Mammary epithelial cell (primary cell): ENCODE measurements at regions of chr5 and their contacts with region 1.

Region 1: DNA sequence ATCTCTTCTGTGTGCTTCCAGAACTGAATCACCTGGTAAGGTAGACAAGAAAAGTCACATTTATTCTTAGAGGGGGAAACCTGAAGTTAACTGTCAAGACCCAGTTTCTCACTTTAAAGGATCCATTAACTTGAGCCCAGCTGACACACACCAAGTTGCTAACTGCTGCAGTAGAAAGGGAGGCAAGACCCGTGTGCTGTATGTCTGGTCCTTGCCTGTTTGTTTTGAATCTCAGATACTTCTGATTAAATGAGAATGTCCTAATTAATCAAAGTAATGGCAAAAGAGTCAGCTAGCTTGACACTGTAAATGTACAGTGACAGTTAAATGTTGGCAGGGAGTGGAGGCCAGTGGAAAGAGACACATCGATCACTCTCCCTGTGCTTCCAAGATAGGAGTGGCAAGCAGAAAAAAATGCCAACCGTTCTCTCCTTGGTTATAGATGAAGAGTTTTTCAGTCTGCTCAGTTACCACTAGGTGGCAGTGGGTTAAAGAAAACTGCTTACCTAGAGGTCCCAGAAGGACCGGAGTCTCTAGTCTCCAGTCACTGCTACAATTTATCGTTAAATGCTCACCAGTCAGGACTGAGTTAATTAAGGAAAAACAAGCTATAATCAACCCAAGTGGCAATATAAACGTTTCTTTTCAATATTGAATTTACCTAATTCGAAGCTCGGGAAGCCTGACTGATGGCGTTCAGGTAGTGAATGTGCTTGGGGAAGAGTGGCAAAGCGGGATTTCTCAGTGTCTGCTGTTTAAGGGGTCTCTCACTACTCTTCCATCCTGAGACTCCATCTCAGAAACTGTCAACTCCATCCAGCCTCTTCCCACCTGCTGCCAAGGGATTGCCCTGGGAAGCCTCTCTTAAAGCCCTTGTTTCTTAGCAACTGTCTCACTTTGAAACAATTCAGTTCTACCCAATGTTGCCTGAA is 18.4 kb downstream of the LSM11 start:
- DNase-seq: peak; percentile 59
- H3K4me3 ChIP-seq: no peak overlapping the region
- H3K27ac ChIP-seq: no peak overlapping the region
- H3K4me1 ChIP-seq: no peaks in the 10 kb centered on the region
- H3K27me3 ChIP-seq: no peaks in the 10 kb centered on the region
- CTCF ChIP-seq: peak; percentile 55 to 81

Region 2: DNA sequence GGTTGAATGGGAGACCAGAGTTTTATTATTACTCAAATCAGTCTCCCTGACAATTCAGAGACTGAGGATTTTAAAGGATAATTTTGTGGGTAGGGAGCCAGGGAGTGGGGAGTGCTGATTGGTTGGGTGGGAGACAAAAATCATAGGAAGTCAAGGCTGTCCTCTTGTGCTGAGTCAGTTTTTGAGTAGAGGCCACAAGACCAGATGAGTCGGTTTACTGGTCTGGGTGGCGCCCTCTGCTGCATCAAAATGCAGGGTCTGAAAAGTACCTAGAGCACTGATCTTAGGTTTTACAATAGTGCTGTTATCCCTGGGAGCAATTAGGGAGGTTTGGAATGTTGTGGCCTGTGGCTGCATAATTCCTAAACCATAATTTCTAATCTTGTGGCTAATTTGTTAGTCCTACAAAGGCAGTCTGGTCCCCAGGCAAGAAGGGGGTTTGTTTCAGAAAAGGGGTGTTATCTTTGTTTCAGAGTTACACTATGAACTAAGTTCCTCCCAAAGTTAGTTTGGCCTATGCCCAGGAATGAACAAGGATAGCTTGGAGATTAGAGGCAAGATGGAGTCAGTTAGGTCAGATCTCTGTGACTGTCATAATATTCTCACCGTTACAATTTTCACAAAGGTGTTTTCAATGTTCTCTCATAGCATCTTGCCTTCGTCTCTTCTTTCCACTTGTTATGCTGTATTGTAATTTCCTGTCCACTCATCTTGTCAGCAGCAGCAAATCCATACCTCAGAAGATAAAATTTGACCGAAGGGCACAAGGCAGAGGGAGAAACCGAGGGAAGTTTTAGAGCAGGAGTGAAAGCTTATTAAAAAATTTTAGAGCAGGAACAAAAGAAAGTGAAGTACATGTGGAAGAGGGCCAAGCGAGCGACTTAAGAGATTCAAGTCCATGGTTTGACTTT is 156.2 kb after region 1 on chr5:
- CTCF ChIA-PET with region 1: no interaction called
- dilution Hi-C with region 1: no loop called
- in situ Hi-C with region 1: no loop called
- intact Hi-C with region 1: loop called (anchors 1 kb)
- DNase-seq: peak; percentile 73
- H3K4me3 ChIP-seq: no peak overlapping the region
- H3K27ac ChIP-seq: no peak overlapping the region
- H3K4me1 ChIP-seq: no peaks in the 10 kb centered on the region
- H3K27me3 ChIP-seq: no peaks in the 10 kb centered on the region
- CTCF ChIP-seq: peak; percentile 57 to 77

Region 3: GRCh38 chr5:157994906-157995519 is 233.1 kb after region 1 on chr5:
- CTCF ChIA-PET with region 1: no interaction called
- dilution Hi-C with region 1: no loop called
- in situ Hi-C with region 1: no loop called
- intact Hi-C with region 1: loop called (anchors 1 kb)
- DNase-seq: peak; percentile 67
- H3K4me3 ChIP-seq: no peak overlapping the region
- H3K27ac ChIP-seq: no peak overlapping the region
- H3K4me1 ChIP-seq: no peaks in the 10 kb centered on the region
- H3K27me3 ChIP-seq: no peaks in the 10 kb centered on the region
- CTCF ChIP-seq: peak; percentile 69 to 90

Region 4: GRCh38 chr5:158165638-158166037 is 403.7 kb after region 1 on chr5:
- CTCF ChIA-PET with region 1: no interaction called
- dilution Hi-C with region 1: no loop called
- in situ Hi-C with region 1: no loop called
- intact Hi-C with region 1: no loop called
- DNase-seq: no peak
- H3K4me3 ChIP-seq: no peak overlapping the region
- H3K27ac ChIP-seq: no peak overlapping the region
- H3K4me1 ChIP-seq: no peaks in the 10 kb centered on the region
- H3K27me3 ChIP-seq: peaks cover 4% of the 10 kb centered on the region
- CTCF ChIP-seq: peak; percentile 7 to 19

Region 5: DNA sequence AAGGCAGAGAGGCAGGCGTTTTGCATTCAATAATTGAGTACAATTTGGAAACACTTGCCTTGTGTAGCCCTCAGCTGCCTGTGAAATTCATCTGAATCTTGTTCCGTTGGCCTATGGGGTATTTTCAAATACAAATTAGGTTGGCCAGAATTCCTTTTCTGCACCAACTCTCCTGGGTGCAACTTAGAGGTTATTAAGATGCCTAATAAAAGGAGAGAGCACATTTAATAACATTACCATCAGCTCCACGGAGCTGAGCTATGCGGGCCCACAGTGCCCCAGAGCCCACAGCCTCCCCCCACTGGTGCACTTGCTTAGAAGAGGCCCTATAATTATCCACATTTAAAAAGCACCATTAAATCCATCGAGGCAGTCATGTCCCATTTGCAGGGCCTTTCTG is 464.5 kb after region 1 on chr5:
- CTCF ChIA-PET with region 1: no interaction called
- dilution Hi-C with region 1: no loop called
- in situ Hi-C with region 1: no loop called
- intact Hi-C with region 1: loop called (anchors 5 kb)
- DNase-seq: no peak
- H3K4me3 ChIP-seq: no peak overlapping the region
- H3K27ac ChIP-seq: no peak overlapping the region
- H3K4me1 ChIP-seq: no peaks in the 10 kb centered on the region
- H3K27me3 ChIP-seq: no peaks in the 10 kb centered on the region
- CTCF ChIP-seq: no peak

Region 6: GRCh38 chr5:159106569-159107282 is 1344.8 kb after region 1 on chr5:
- CTCF ChIA-PET with region 1: no interaction called
- dilution Hi-C with region 1: no loop called
- in situ Hi-C with region 1: loop called in 1 of 2 experiments (anchors 25 kb)
- intact Hi-C with region 1: loop called (anchors 10 kb)
- DNase-seq: peak; percentile 38
- H3K4me3 ChIP-seq: peak overlapping the region in 2 of 3 experiments; percentile 14 to 28
- H3K27ac ChIP-seq: no peak overlapping the region
- H3K4me1 ChIP-seq: peaks cover 4% of the 10 kb centered on the region
- H3K27me3 ChIP-seq: peaks cover 30% of the 10 kb centered on the region
- CTCF ChIP-seq: peak; percentile 88 to 90